AG04450 (cell line): ENCODE measurements at regions of chr17 and their contacts with region 1.

Region 1: GRCh38 chr17:50783193-50783660 is 15.9 kb upstream of the ANKRD40CL start:
- DNase-seq: peak; percentile 61
- H3K4me3 ChIP-seq: no peak overlapping the region
- H3K27ac ChIP-seq: no peak overlapping the region
- H3K27me3 ChIP-seq: peaks cover 3% of the 10 kb centered on the region
- CTCF ChIP-seq: peak; percentile 96

Region 2: DNA sequence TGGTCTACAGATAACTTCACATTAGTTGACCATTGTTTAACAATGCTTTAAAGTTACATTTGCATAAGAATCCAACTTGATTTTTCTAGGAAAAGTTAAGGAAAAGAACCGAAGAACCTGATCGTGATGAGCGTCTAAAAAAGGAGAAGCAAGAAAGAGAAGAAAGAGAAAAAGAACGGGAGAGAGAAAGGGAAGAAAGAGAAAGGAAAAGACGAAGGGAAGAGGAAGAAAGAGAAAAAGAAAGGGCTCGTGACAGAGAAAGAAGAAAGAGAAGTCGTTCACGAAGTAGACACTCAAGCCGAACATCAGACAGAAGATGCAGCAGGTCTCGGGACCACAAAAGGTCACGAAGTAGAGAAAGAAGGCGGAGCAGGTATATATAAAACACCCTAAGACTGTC is 37.6 kb before region 1 on chr17:
- CTCF ChIA-PET with region 1: interaction called, 16 read pairs
- POLR2A ChIA-PET with region 1: no interaction called
- DNase-seq: no peak
- H3K4me3 ChIP-seq: no peak overlapping the region
- H3K27ac ChIP-seq: no peak overlapping the region
- H3K27me3 ChIP-seq: no peaks in the 10 kb centered on the region
- CTCF ChIP-seq: no peak

Region 3: DNA sequence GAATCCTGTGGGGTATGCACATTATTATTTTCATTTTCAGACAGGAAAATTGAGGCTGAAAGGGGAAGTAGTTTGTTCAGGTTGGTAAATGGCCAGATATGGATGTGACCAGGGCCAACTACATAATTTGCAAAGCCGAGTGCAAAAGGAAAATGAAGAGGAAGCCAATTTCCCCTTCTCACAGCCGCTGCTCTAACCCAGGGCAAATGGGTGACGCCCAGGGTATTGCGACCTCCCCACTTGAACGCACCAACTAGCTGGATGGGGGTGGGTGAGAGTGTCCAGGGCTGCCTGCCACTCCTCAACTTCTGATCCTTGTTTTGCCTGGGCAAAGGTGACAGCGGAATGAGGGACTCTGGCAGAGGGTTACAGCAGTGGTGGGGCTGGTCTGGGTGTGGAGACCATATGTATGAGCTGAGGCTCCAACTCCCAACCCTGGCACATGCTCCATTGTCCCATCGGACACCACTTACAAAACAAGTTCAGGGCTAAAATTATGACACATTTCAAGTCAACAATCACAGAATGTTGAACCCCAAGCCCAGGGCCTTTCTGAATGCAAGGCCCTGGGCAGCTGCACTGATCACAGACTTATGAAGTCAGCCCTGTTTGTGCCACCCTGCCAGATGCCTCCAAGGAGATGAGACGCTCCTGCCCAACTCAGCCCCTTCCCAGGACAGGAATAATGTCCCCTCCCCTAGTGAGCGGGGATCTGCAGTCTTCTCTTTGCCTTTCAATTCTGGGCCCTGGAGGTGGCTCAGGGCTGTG is 17.6 kb before region 1 on chr17:
- CTCF ChIA-PET with region 1: interaction called, 37 read pairs
- POLR2A ChIA-PET with region 1: no interaction called
- DNase-seq: no peak
- H3K4me3 ChIP-seq: no peak overlapping the region
- H3K27ac ChIP-seq: no peak overlapping the region
- H3K27me3 ChIP-seq: peaks cover 7% of the 10 kb centered on the region
- CTCF ChIP-seq: no peak

Region 4: DNA sequence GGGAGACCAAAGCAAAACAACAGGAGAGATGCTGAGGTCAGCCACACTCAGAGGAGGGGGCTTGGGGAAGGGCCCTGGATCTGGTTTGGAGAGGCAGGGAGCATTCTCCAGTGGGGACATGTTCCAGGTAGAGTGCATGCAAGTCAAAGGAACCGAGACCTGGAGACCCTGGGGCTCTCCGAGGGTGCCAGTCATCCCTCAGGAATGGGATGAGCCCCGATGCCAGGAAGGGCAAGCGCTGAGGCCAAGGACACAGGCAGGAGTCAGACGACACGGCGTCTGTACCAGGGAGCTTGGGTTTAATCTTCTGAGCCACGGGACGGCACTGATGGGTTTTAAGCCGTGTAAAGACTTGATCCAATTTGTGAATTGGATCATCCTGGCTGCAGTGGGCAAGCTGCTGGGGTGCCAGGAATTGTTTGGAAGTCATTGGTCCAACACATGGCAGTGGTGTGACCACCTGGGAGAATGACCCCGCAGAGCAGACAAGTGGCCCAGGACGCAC is 17.0 kb after region 1 on chr17:
- CTCF ChIA-PET with region 1: interaction called, 19 read pairs
- POLR2A ChIA-PET with region 1: no interaction called
- DNase-seq: no peak
- H3K4me3 ChIP-seq: no peak overlapping the region
- H3K27ac ChIP-seq: no peak overlapping the region
- H3K27me3 ChIP-seq: no peaks in the 10 kb centered on the region
- CTCF ChIP-seq: no peak

Region 5: GRCh38 chr17:50822550-50822949 is 39.3 kb after region 1 on chr17:
- CTCF ChIA-PET with region 1: interaction called, 19 read pairs
- POLR2A ChIA-PET with region 1: no interaction called
- DNase-seq: no peak
- H3K4me3 ChIP-seq: no peak overlapping the region
- H3K27ac ChIP-seq: no peak overlapping the region
- H3K27me3 ChIP-seq: peaks cover 21% of the 10 kb centered on the region
- CTCF ChIP-seq: no peak

Region 6: DNA sequence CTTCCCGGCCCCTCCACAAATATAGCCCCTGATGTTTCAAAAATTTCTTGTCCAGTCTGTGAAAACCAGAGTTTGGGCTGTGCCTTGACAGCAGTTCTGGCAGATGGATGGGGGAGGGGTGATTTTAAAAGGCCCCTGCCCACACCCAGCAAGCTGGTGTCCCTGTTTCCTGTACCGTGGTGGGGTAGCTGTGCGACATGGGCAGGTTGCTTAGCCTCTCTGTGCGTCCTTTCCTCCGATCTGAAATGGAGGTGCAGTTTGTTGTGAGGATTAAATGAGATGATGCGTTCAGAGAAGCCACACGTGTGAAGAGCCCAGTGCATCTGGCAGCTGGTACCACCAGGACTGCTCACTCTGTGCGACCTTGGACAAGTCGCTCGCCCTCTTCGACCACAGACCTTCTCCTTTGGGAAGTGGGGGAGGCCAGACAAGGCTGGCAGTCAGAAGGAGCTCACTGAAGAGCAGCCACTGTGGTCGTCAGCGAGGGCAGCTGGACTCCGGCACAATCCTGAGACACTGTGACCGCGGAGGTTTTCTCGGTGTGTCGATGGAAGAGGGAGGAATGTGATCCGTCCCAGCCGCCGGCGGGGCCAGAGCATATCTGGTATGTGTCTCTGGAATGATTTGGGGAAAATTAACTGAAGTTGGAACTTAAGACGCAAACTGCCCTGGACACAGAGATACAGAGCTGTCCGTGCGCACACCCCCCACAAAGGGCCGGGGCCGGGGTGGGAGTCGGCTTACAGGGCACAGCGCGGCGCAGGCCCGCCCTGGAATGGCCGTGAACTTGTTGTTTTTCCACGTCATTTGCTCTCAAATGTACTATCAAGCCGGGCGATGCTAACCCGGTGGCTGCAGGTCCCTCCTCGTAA is 51.4 kb after region 1 on chr17:
- CTCF ChIA-PET with region 1: interaction called, 192 read pairs
- POLR2A ChIA-PET with region 1: no interaction called
- DNase-seq: peak; percentile 4
- H3K4me3 ChIP-seq: peak overlapping the region; percentile 17; the same call in 1 of the 2 replicates
- H3K27ac ChIP-seq: peak overlapping the region; percentile 21
- H3K27me3 ChIP-seq: peaks cover 3% of the 10 kb centered on the region
- CTCF ChIP-seq: no peak

Region 7: GRCh38 chr17:50853015-50853615 is 69.9 kb after region 1 on chr17:
- CTCF ChIA-PET with region 1: interaction called, 31 read pairs
- POLR2A ChIA-PET with region 1: no interaction called
- DNase-seq: no peak
- H3K4me3 ChIP-seq: no peak overlapping the region
- H3K27ac ChIP-seq: no peak overlapping the region
- H3K27me3 ChIP-seq: peaks cover 2% of the 10 kb centered on the region
- CTCF ChIP-seq: no peak